Mammary epithelial cell (primary cell): ENCODE measurements at regions of chr1 and their contacts with region 1.

Region 1: DNA sequence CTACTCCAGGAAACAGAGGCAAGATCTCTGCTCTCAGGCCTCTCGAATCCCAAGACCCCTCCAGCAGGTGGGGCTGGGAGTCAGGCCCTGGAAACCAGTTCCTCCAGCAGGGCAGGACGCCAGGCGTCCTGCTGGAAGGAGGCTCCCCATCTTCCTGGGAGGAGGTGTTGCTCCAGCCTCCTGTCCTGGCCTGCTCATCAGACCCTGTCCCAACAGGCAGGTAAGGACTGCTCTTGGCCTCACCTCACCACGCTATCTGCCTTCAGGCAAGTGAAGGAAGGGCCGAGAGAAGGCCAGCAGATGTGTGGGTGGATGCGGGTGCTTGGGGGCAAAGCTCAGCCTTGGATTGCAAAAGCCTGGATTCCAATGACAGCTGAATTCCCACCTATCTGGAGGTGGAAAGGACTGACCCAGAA is 82.9 kb downstream of the SSBP3 start:
- DNase-seq: peak; percentile 94
- H3K4me3 ChIP-seq: no peak overlapping the region
- H3K27ac ChIP-seq: peak overlapping the region; percentile 60
- H3K4me1 ChIP-seq: peaks cover 40% of the 10 kb centered on the region
- H3K27me3 ChIP-seq: no peaks in the 10 kb centered on the region
- CTCF ChIP-seq: peak; percentile 36 to 69

Region 2: DNA sequence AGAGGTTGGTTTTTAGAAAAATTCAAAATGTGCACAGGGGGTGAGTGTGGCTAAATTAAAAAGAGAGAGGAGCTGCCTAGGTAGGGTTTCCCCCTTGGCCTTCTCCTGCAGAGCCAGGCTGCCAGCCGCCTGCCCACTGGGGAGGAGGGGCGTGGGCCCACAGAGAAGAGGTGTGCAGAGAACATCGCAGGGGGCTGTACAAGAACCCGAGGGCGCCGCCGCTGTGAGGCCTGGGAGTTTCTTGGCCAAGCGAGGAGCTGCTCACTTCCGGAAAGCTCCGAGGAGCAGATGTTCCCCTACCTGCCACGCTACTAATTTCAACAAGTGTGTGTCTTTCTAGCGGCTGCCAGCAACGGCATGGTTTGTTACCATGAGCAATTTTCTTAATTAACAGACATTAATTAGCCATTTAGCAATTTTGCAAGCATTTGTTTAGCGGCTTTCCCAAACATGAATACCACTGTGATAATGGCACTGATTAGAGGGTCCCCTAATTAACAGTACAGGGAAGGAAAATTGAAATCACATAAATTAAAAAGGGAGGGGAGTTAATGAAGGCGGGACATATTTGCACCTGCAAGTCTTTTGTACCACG is 63.7 kb before region 1 on chr1:
- CTCF ChIA-PET with region 1: no interaction called
- dilution Hi-C with region 1: no loop called
- in situ Hi-C with region 1: no loop called
- intact Hi-C with region 1: loop called (anchors 5 kb)
- DNase-seq: no peak
- H3K4me3 ChIP-seq: no peak overlapping the region
- H3K27ac ChIP-seq: no peak overlapping the region
- H3K4me1 ChIP-seq: peaks cover 3% of the 10 kb centered on the region
- H3K27me3 ChIP-seq: no peaks in the 10 kb centered on the region
- CTCF ChIP-seq: no peak

Region 3: DNA sequence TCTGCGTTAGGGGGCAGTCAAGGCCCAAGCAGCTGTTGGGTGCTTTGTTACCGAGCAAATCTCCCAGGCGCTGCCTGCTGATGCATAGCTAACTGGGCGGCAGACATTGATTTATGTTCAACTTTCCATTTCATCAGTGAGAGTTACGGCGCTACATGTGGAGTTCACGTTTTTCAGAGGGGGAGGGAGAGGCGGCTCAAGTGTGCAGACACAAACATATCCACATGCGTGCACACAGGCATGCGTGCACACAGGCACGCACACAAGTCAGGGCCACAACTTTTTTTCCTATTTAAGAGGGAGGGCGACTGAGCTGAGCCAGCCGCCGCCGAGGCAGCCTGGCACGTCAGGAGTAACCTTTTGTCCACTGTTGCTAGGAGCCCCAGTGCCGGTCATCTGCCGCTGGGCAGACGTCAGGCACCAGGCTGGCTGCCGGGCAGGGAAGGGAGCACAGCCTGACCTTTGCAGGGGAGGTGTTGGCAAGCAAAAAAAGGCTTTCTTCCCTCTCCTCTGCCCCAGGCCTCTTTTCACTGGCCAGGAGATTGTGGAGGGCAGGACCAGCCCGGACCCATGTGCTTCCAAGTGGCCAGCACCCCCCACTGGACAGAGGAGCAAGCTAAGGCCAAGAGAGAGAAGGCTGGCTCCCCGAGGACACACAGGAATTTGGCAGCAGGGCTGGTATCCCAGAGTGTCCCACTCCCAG is 50.1 kb before region 1 on chr1:
- CTCF ChIA-PET with region 1: no interaction called
- dilution Hi-C with region 1: loop called (anchors 5 kb)
- in situ Hi-C with region 1: no loop called
- intact Hi-C with region 1: no loop called
- DNase-seq: no peak
- H3K4me3 ChIP-seq: no peak overlapping the region
- H3K27ac ChIP-seq: no peak overlapping the region
- H3K4me1 ChIP-seq: peaks cover 20% of the 10 kb centered on the region
- H3K27me3 ChIP-seq: no peaks in the 10 kb centered on the region
- CTCF ChIP-seq: no peak

Region 4: GRCh38 chr1:54361342-54361741 is 38.0 kb after region 1 on chr1:
- CTCF ChIA-PET with region 1: no interaction called
- dilution Hi-C with region 1: no loop called
- in situ Hi-C with region 1: no loop called
- intact Hi-C with region 1: no loop called
- DNase-seq: no peak
- H3K4me3 ChIP-seq: no peak overlapping the region
- H3K27ac ChIP-seq: no peak overlapping the region
- H3K4me1 ChIP-seq: peaks cover 12% of the 10 kb centered on the region
- H3K27me3 ChIP-seq: no peaks in the 10 kb centered on the region
- CTCF ChIP-seq: no peak

Region 5: GRCh38 chr1:54384911-54385726 is 61.8 kb after region 1 on chr1:
- CTCF ChIA-PET with region 1: no interaction called
- dilution Hi-C with region 1: loop called (anchors 5 kb)
- in situ Hi-C with region 1: no loop called
- intact Hi-C with region 1: no loop called
- DNase-seq: no peak
- H3K4me3 ChIP-seq: no peak overlapping the region
- H3K27ac ChIP-seq: no peak overlapping the region
- H3K4me1 ChIP-seq: no peaks in the 10 kb centered on the region
- H3K27me3 ChIP-seq: no peaks in the 10 kb centered on the region
- CTCF ChIP-seq: no peak

Region 6: GRCh38 chr1:54397090-54397591 is 73.8 kb after region 1 on chr1:
- CTCF ChIA-PET with region 1: no interaction called
- dilution Hi-C with region 1: no loop called
- in situ Hi-C with region 1: no loop called
- intact Hi-C with region 1: no loop called
- DNase-seq: no peak
- H3K4me3 ChIP-seq: no peak overlapping the region
- H3K27ac ChIP-seq: no peak overlapping the region
- H3K4me1 ChIP-seq: no peaks in the 10 kb centered on the region
- H3K27me3 ChIP-seq: no peaks in the 10 kb centered on the region
- CTCF ChIP-seq: no peak

Region 7: DNA sequence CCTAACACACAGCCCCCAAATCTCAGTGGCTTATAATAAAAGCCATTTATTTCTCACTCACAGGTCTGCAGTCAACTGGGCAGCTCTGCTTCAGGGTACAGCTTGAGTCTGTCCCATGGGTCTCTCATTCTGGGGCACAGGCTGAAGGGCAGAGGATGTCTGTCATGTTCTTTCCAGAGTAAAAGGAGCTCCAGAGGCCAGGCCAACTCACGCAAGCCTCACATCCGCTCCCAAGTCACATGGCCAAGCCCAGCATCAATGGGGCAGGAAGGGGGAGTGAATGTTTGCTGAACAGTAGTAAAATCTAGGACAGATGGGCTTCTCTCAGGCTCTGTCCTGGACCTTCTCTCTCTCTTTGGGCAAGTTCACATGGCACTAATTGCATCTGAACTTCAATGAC is 90.0 kb after region 1 on chr1:
- CTCF ChIA-PET with region 1: no interaction called
- dilution Hi-C with region 1: loop called (anchors 5 kb)
- in situ Hi-C with region 1: no loop called
- intact Hi-C with region 1: no loop called
- DNase-seq: no peak
- H3K4me3 ChIP-seq: no peak overlapping the region
- H3K27ac ChIP-seq: no peak overlapping the region
- H3K4me1 ChIP-seq: peaks cover 12% of the 10 kb centered on the region
- H3K27me3 ChIP-seq: no peaks in the 10 kb centered on the region
- CTCF ChIP-seq: no peak